ENCODE measurements at regions of chr1 and their contacts with region 1.

Region 1: GRCh38 chr1:58739856-58740466 is 40.1 kb upstream of the MYSM1 start:
- DNase-seq: no peak
- ATAC-seq: no peak

Region 2: GRCh38 chr1:56934430-56935060 is 1805.4 kb before region 1 on chr1:
- intact Hi-C with region 1: no loop called
- DNase-seq: no peak
- ATAC-seq: no peak

Region 3: GRCh38 chr1:58688931-58689566 is 50.9 kb before region 1 on chr1:
- intact Hi-C with region 1: no loop called
- DNase-seq: no peak
- ATAC-seq: no peak

Region 4: GRCh38 chr1:58768971-58769808 is 29.2 kb after region 1 on chr1:
- intact Hi-C with region 1: loop called (anchors 1 kb)
- DNase-seq: peak; percentile 89
- ATAC-seq: no peak

Region 5: DNA sequence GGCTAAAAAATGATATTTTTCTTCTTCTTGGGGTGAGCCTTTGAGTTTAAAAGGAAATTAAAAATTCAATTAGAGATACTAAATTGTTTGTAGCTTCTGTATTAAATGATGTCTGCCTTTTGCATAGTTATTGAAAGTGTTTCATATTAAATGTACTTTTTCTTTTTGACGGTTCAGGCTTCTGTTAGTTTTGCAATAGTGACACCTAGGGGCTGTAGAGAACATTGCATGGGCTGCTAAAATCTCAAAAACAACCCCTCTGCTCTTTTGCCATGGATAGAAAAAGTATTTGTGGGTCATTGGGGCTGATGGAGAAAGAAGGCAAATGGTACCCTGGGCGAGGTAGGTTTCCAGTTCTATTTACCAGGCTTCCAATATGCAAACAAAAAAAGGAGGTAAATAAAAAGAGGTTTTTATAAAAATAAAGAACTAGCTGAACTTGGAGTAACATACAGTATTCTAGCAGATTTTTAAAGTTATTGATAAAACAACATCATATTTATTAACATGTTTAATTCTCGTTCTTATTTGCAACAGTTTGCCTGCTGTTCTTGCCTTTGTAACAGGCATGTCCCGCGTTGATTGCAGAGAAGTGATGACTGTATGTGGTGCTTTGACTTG is 959.4 kb after region 1 on chr1:
- intact Hi-C with region 1: loop called (anchors 1 kb)
- DNase-seq: no peak
- ATAC-seq: no peak